Activated CD4-positive, alpha-beta memory T cell treated with anti-CD3 and anti-CD28 coated beads for 36 hours (primary cell): ENCODE measurements at regions of chr12 and their contacts with region 1.

Region 1: GRCh38 chr12:39692258-39692853 is 72.8 kb upstream of the ABCD2 start:
- DNase-seq: no peak
- H3K4me3 Mint-ChIP-seq: no peak overlapping the region
- H3K27ac Mint-ChIP-seq: no peak overlapping the region
- H3K4me1 Mint-ChIP-seq: peaks cover under 1% of the 10 kb centered on the region
- H3K27me3 Mint-ChIP-seq: no peaks in the 10 kb centered on the region

Region 2: GRCh38 chr12:39173726-39174125 is 518.6 kb before region 1 on chr12:
- CTCF ChIA-PET with region 1: no interaction called
- POLR2A ChIA-PET with region 1: no interaction called
- intact Hi-C with region 1: no loop called
- DNase-seq: no peak
- H3K4me3 Mint-ChIP-seq: no peak overlapping the region
- H3K27ac Mint-ChIP-seq: no peak overlapping the region
- H3K4me1 Mint-ChIP-seq: no peaks in the 10 kb centered on the region
- H3K27me3 Mint-ChIP-seq: no peaks in the 10 kb centered on the region

Region 3: GRCh38 chr12:39319187-39319586 is 373.2 kb before region 1 on chr12:
- CTCF ChIA-PET with region 1: interaction called, 3 read pairs
- POLR2A ChIA-PET with region 1: no interaction called
- intact Hi-C with region 1: loop called (anchors 1 kb)
- DNase-seq: no peak
- H3K4me3 Mint-ChIP-seq: no peak overlapping the region
- H3K27ac Mint-ChIP-seq: no peak overlapping the region
- H3K4me1 Mint-ChIP-seq: no peaks in the 10 kb centered on the region
- H3K27me3 Mint-ChIP-seq: no peaks in the 10 kb centered on the region

Region 4: DNA sequence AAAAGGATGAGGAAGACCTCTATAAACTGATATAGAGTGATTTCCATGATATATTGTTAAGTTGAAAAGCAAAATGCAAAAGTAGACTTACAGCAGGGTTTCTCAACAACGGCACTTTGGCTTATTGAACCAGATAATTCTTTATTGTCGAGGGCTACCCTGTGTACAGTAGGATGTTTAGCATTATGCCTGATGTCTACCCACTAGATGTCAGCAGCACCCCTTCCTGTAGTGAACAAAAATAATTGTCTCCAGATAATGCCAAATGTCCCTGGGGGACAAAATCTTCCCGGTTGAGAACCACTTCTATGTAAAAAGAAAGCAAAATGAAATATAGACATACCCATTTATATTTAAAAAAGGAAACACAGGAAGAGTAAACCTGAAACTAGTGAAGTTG is 105.1 kb before region 1 on chr12:
- CTCF ChIA-PET with region 1: interaction called, 10 read pairs
- POLR2A ChIA-PET with region 1: no interaction called
- intact Hi-C with region 1: loop called (anchors 1 kb)
- DNase-seq: no peak
- H3K4me3 Mint-ChIP-seq: no peak overlapping the region
- H3K27ac Mint-ChIP-seq: no peak overlapping the region
- H3K4me1 Mint-ChIP-seq: peaks cover 9% of the 10 kb centered on the region
- H3K27me3 Mint-ChIP-seq: no peaks in the 10 kb centered on the region